ENCODE measurements at regions of chr18 and their contacts with region 1.

Region 1: GRCh38 chr18:22169007-22169864 is at the start of gene GATA6:
- DNase-seq: peak; percentile 89
- H3K4me3 ChIP-seq: peak within 1 kb of the TSS; percentile 57 to 78 (median 74)
- H3K27ac ChIP-seq: peak within 1 kb of the TSS; percentile 80 to 95 (median 86)
- H3K4me1 ChIP-seq: peaks cover 0 to 54% (median 46%) of the 10 kb centered on the region in 4 donors
- H3K27me3 ChIP-seq: peaks cover 37 to 95% (median 58%) of the 10 kb centered on the region in 3 donors
- CTCF ChIP-seq: peak in 2 of 4 experiments; percentile 21 to 23
- EP300 ChIP-seq: no peak
- POLR2A ChIP-seq: peak; percentile 61 to 81
- total RNA-seq, gene GATA6: 2.5 to 15.1 (median 9.1) TPM

Region 2: DNA sequence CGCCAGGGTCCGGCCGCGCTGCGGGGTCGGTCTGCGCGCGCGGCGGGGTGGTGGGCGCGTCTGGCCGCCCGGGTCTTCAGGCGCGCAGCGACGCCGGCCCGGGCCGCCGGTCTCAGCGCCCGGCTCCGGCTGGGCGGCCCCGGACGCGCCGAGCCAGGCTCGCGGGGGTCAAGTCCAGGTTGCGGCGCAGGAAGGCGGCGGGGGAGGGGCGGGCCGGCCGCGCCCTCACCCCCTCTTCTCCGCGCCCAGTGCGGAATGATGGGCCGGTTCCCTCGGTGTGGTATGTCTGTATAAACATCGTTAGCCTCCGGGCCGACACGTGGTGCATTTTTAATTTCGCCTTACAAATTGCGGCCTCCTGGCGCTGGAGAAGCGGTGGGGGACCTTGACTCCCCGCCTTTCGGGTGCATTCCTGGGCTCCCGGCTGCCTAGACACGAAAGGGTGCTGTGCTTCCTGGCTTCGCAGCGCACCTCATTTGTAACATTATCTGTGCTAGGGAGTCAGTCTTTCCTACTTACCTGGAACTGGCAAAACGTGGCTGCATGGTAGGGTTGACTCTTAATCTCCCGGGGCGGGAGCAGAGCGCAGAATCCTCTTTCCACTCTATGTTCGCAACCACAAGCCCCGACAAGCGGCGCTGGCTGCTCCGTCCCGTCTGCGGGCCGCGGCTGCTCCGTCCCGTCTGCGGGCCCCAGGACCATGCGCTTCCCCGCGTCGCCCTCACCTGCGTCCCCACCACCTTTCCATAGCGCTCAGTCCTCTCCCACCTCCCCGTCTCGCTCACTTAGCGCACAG is 179.5 kb after region 1 on chr18:
- intact Hi-C with region 1: loop called (anchors 5 kb)
- DNase-seq: no peak
- H3K4me3 ChIP-seq: peak overlapping the region; percentile 23 to 58 (median 51)
- H3K27ac ChIP-seq: peak overlapping the region; percentile 45 to 79 (median 59)
- H3K4me1 ChIP-seq: peaks cover 0 to 28% (median 23%) of the 10 kb centered on the region in 4 donors
- H3K27me3 ChIP-seq: peaks cover 0 to 7% (median 0%) of the 10 kb centered on the region in 3 donors
- CTCF ChIP-seq: no peak
- EP300 ChIP-seq: no peak
- POLR2A ChIP-seq: no peak

Region 3: GRCh38 chr18:22465859-22466457 is 296.7 kb after region 1 on chr18:
- intact Hi-C with region 1: loop called (anchors 10 kb)
- DNase-seq: peak; percentile 70
- H3K4me3 ChIP-seq: no peak overlapping the region
- H3K27ac ChIP-seq: peak overlapping the region; percentile 41 to 72 (median 53)
- H3K4me1 ChIP-seq: peaks cover 0 to 37% (median 36%) of the 10 kb centered on the region in 4 donors
- H3K27me3 ChIP-seq: no peaks in the 10 kb centered on the region
- CTCF ChIP-seq: no peak
- EP300 ChIP-seq: peak in 1 of 4 donors; percentile 62
- POLR2A ChIP-seq: no peak

Region 4: DNA sequence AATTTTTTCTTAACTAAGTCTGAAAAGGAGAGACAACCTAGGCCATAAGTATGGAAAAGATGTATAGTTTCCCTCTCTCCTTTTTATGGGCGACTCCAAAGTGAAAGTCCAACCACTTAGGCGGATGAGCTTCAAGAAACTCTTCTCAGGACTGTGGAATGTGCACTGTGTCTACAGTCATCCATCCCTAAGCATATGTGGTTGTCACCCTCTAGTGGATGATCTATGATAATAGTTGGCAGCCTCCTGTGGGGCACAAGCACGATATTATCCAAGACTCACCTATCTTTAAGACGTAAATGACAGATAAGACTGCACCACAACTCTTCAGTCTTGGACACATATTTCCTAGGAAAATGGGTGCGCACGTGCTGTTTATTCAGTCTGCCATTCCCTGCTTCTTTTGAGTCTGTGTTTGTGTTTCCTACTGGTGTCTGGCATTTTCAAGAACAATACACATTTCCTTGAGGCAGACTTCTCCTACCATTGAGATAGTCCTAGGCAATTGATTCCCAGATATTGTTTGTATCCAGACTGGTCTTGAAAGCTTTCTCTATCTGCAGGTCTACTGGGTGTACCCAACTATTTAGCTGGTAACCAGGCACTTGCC is 394.0 kb after region 1 on chr18:
- intact Hi-C with region 1: loop called (anchors 1 kb)
- DNase-seq: no peak
- H3K4me3 ChIP-seq: no peak overlapping the region
- H3K27ac ChIP-seq: no peak overlapping the region
- H3K4me1 ChIP-seq: peaks cover 0 to 23% (median 9%) of the 10 kb centered on the region in 4 donors
- H3K27me3 ChIP-seq: no peaks in the 10 kb centered on the region
- CTCF ChIP-seq: peak in 3 of 4 experiments; percentile 65 to 76 (median 68)
- EP300 ChIP-seq: no peak
- POLR2A ChIP-seq: no peak

Region 5: DNA sequence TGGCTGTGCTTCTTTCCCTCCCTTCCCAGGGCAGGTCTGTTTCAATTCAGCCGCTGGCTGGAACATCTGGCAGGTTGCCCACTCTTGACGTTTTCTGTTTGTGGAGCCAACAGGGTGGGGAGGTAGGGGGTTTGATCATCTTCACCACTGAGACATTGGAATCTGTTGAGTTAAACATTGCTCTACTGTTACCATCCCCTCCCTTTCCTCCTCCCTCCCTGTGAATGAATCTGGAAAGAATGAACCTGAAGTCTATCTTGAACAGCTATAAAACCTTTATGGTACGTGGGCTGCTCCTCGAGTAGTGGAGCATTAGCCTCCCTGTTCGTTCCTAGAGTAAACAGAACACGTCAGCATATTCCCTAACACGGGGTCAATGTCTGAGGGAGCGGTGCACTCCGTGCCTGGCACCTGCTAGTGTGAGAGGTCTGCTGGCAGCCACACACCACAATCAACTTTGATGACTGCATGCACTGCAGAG is 514.0 kb after region 1 on chr18:
- intact Hi-C with region 1: loop called (anchors 10 kb)
- DNase-seq: peak; percentile 91
- H3K4me3 ChIP-seq: no peak overlapping the region
- H3K27ac ChIP-seq: peak overlapping the region; percentile 12 to 71 (median 43)
- H3K4me1 ChIP-seq: peaks cover 0 to 30% (median 27%) of the 10 kb centered on the region in 4 donors
- H3K27me3 ChIP-seq: no peaks in the 10 kb centered on the region
- CTCF ChIP-seq: no peak
- EP300 ChIP-seq: peak; percentile 71 to 91 (median 82)
- POLR2A ChIP-seq: no peak

Region 6: GRCh38 chr18:22933206-22933957 is 764.1 kb after region 1 on chr18 and contains the start of gene RBBP8:
- intact Hi-C with region 1: loop called (anchors 5 kb)
- DNase-seq: peak; percentile 90
- H3K4me3 ChIP-seq: peak within 1 kb of the TSS; percentile 77 to 91 (median 82)
- H3K27ac ChIP-seq: peak within 1 kb of the TSS; percentile 97 to 99 (median 98)
- H3K4me1 ChIP-seq: peaks cover 0 to 12% (median 2%) of the 10 kb centered on the region in 4 donors
- H3K27me3 ChIP-seq: no peaks in the 10 kb centered on the region
- CTCF ChIP-seq: no peak
- EP300 ChIP-seq: no peak
- POLR2A ChIP-seq: peak; percentile 63 to 77
- total RNA-seq, gene RBBP8: 10.3 to 22.7 (median 14.7) TPM